Activated naive CD4-positive, alpha-beta T cell treated with anti-CD3 and anti-CD28 coated beads for 36 hours (primary cell): ENCODE measurements at regions of chr2 and their contacts with region 1.

Region 1: GRCh38 chr2:230219419-230220331 is at the start of gene SP110:
- DNase-seq: peak; percentile 91
- H3K4me3 Mint-ChIP-seq: peak within 1 kb of the TSS; percentile 99
- H3K27ac Mint-ChIP-seq: peak within 1 kb of the TSS; percentile 99
- H3K4me1 Mint-ChIP-seq: peaks cover 62% of the 10 kb centered on the region
- H3K27me3 Mint-ChIP-seq: no peaks in the 10 kb centered on the region
- total RNA-seq, gene SP110: 85.3 to 88.8 TPM

Region 2: GRCh38 chr2:229572507-229573271 is 647.0 kb before region 1 on chr2:
- CTCF ChIA-PET with region 1: no interaction called
- intact Hi-C with region 1: no loop called
- DNase-seq: no peak
- H3K4me3 Mint-ChIP-seq: no peak overlapping the region
- H3K27ac Mint-ChIP-seq: no peak overlapping the region
- H3K4me1 Mint-ChIP-seq: no peaks in the 10 kb centered on the region
- H3K27me3 Mint-ChIP-seq: peaks cover 10% of the 10 kb centered on the region

Region 3: DNA sequence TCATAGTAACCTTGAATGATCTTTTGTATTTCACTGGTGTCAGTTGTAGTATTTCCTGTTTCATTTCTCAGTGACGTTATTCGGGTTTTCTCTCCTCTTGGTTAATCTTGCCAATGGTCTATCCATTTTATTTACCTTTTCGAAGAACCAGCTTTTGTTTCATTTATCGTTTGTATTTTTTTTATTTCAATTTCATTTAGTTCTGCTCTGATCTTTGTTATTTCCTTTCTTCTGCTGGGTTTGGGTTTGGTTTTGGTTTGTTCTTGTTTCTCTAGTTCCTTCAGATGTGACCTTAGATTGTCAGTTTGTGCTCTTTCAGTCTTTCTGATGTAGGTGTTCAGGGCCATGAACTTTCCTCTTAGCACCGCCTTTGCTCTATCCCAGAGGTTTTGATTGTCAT is 42.6 kb after region 1 on chr2:
- CTCF ChIA-PET with region 1: no interaction called
- intact Hi-C with region 1: loop called (anchors 1 kb)
- DNase-seq: no peak
- H3K4me3 Mint-ChIP-seq: peak overlapping the region; percentile 45
- H3K27ac Mint-ChIP-seq: peak overlapping the region; percentile 82
- H3K4me1 Mint-ChIP-seq: peaks cover 41% of the 10 kb centered on the region
- H3K27me3 Mint-ChIP-seq: no peaks in the 10 kb centered on the region

Region 4: GRCh38 chr2:230347659-230348305 is 128.1 kb after region 1 on chr2:
- CTCF ChIA-PET with region 1: no interaction called
- intact Hi-C with region 1: loop called (anchors 2 kb)
- DNase-seq: peak; percentile 76
- H3K4me3 Mint-ChIP-seq: no peak overlapping the region
- H3K27ac Mint-ChIP-seq: peak overlapping the region; percentile 85
- H3K4me1 Mint-ChIP-seq: peaks cover 71% of the 10 kb centered on the region
- H3K27me3 Mint-ChIP-seq: no peaks in the 10 kb centered on the region

Region 5: DNA sequence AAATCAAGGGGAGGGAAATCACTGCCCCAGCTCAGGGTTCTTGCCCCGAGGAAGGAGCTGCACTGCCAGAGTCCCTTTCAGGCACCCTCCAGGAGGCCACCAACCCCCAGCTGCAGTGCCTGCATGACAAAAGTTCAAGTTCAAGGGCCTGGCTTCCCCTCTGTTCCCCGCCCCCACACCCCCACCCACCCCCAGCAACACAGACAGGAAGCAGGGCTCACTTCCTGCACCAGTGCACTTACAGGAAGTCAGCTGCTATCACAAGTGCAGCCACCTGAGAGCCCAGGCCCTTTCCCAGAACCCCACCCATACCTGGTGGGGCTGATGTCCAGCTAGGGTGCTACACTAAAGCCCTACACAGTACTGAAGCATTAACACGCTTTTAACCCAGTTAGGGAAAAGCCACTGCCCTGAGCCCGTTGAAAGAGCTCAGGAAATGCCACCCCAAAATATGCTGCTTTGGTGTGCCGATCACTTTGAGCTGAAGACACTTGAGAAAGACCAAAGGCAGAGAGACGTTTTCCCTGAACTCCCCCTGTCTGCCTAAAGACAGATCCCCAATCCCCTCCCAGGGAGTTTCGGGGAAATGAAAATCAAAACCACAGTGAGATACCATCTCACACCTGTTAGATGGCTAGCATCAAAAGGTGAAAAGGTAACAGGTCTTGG is 383.0 kb after region 1 on chr2:
- CTCF ChIA-PET with region 1: no interaction called
- intact Hi-C with region 1: loop called (anchors 1 kb)
- DNase-seq: peak; percentile 76
- H3K4me3 Mint-ChIP-seq: peak overlapping the region; percentile 8
- H3K27ac Mint-ChIP-seq: peak overlapping the region; percentile 89
- H3K4me1 Mint-ChIP-seq: peaks cover 38% of the 10 kb centered on the region
- H3K27me3 Mint-ChIP-seq: no peaks in the 10 kb centered on the region